Posterior cingulate gyrus (tissue), 11 donors: ENCODE measurements at regions of chr15 and their contacts with region 1.

Region 1: GRCh38 chr15:22838292-22839042 is at the start of gene NIPA2:
- DNase-seq: peak; percentile 93 to 99 (median 96)

Region 2: DNA sequence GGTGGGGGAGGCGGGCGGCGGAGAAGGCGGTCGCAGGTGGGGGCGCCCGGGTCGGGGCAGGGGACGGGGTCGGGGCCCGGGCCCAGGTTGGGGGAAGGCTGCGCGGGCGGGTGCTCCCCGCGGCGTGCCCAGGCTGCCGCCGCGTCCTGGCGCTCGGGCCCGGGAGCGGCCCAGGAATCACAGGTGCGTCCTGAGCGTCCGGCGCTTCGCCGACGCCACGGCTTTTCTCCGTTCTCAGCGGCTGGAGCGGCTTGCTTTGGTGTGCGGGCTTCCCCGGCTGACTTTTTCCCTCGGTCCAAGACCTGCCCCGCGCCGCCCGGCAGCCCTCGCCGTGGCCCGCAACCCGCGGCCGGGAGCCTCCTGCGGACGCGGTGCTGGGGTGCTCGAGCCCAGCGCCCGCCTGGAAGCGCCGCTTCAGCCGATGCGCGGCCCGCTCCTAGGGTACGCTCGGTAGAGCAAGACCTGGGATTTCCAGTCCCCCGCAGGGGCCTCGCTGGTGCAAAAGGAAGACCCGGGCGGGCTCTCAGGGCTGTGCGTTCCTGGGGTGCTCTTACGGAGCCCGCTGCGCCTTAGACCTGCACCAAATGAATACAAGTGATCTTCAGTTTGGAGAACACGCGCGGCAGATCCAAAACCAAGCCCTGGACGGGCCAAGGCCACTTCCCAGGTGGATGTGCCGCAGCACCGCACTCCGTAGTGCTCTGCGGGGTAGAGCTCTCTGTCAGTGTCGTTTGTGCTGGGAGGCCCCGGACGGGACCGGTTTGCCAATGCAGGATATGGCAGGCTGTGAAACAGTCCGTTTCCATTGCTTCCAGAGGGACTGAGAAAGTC is 51.4 kb before region 1 on chr15:
- intact Hi-C with region 1: loop called (anchors 2 kb)
- DNase-seq: peak in 6 of 10 donors; percentile 16 to 87 (median 37)